ENCODE measurements at regions of chr2 and their contacts with region 1.

Region 1: GRCh38 chr2:25376750-25377621 is 35.3 kb upstream of the DNMT3A start:
- DNase-seq: peak; percentile 92
- H3K4me3 Mint-ChIP-seq: peak overlapping the region; percentile 72
- H3K27ac Mint-ChIP-seq: peak overlapping the region; percentile 94
- H3K4me1 Mint-ChIP-seq: peaks cover 51% of the 10 kb centered on the region
- H3K27me3 Mint-ChIP-seq: no peaks in the 10 kb centered on the region

Region 2: DNA sequence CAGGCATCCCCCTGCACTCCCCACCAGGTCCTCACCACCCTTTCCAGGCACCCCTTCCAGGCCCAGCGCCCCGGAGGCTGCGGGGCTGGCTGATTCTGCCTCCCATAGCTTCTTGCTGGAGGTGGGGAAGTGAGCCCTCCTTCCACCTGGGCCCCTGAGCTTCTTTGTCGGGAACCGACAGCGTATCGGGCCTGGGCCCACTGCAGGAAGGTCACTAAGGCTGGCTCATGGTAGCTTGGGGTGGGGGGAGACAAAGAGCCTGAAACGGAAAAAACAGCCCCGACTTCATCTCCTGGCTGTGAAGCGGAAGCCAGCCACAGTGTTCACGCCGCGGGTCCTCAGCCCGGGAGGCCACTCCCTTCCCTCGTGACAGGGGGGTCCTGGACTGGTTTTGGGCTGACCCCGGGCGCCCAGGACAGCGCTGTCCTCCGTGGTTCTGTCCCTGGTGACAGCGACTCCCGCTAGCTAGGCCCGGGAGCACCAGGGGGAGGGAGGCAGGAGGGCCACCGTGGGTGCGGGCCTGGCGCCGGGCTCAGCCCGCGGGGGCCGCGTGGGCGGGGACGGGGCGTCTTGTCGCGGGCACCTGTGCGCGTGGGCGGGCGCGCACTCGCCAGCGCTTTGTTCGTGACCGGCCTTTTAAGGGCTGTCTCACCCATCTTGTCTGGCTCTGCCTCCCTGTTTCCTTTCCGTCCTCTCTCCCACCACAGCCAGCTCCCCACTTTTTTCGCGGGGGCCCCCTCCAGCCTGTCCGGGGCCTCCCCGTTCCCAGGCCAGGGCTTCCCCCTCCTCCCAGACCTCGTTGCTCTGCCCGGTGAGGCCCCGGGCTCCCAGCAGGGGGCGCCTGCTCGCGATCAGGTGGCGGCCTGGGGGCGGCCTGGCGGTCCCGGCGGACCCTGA is 100.2 kb before region 1 on chr2:
- intact Hi-C with region 1: loop called (anchors 1 kb)
- DNase-seq: peak; percentile 73
- H3K4me3 Mint-ChIP-seq: peak overlapping the region; percentile 53
- H3K27ac Mint-ChIP-seq: peak overlapping the region; percentile 81
- H3K4me1 Mint-ChIP-seq: peaks cover 67% of the 10 kb centered on the region
- H3K27me3 Mint-ChIP-seq: no peaks in the 10 kb centered on the region

Region 3: DNA sequence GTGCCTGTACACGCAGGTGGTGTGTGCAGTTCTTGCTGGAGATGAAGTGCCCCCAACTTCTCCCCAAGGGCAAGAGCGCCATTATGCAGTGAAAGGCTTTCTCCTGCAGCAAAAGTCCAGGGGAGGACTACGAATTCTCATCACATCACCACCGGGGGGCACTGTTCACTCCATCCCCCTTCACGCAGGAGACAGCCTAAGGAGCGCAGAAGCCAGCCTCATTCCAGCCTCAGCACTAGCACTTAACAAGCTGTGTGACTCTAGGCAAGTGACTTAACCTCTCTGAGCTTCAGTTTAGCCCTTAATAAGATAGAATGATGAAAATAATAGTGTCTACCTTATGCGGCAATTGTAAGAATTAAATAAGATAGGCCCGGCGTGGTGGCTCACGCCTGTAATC is 67.6 kb before region 1 on chr2:
- intact Hi-C with region 1: loop called (anchors 1 kb)
- DNase-seq: no peak
- H3K4me3 Mint-ChIP-seq: peak overlapping the region; percentile 19
- H3K27ac Mint-ChIP-seq: peak overlapping the region; percentile 18
- H3K4me1 Mint-ChIP-seq: peaks cover 58% of the 10 kb centered on the region
- H3K27me3 Mint-ChIP-seq: no peaks in the 10 kb centered on the region

Region 4: DNA sequence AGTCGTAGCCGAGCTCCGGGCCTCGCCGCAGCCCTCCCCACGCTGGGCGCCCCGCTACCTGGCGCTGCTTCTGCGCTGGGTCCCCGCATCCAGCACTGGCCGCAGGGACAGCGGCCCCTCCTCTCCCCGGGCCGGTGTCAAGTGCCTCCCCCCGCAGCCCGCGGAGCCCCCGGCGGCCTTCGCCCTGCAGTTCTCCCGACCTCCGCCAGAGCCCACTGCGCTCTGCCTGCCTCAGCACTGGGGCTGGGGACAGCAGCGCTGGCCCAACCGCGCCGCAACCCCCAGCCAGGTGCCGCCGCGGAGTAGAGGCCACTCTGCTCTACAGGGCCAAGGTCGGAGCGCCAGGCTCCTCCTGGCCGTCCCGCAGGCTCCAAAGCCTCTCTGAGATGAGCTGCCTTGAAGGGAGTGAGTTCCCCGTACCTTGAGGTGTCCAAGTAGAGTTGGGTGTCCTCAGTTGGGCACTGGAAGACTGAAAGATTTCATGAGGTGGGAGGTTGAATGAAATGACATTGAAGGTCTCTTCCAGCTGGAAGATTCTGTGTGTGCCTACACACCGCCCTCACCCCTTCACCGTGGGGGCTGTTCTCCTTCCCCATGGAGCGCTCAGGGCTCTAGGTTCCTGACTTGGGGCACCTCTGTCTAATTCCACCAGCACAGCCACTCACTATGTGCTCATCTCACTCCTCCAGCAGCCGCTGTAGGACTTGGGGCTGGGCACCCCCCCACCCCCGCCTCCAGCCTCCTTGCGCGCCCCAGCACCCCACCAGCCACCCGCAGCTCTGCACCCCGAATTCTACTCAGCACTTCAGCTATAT is 34.4 kb before region 1 on chr2:
- intact Hi-C with region 1: loop called (anchors 1 kb)
- DNase-seq: peak; percentile 79
- H3K4me3 Mint-ChIP-seq: peak overlapping the region; percentile 88
- H3K27ac Mint-ChIP-seq: peak overlapping the region; percentile 88
- H3K4me1 Mint-ChIP-seq: peaks cover 37% of the 10 kb centered on the region
- H3K27me3 Mint-ChIP-seq: peaks cover 5% of the 10 kb centered on the region

Region 5: GRCh38 chr2:25521665-25522387 is 144.8 kb after region 1 on chr2:
- intact Hi-C with region 1: loop called (anchors 1 kb)
- DNase-seq: peak; percentile 56
- H3K4me3 Mint-ChIP-seq: peak overlapping the region; percentile 5
- H3K27ac Mint-ChIP-seq: peak overlapping the region; percentile 65
- H3K4me1 Mint-ChIP-seq: peaks cover 21% of the 10 kb centered on the region
- H3K27me3 Mint-ChIP-seq: no peaks in the 10 kb centered on the region